CD8-positive, alpha-beta T cell (primary cell): ENCODE measurements at regions of chr5 and their contacts with region 1.

Region 1: DNA sequence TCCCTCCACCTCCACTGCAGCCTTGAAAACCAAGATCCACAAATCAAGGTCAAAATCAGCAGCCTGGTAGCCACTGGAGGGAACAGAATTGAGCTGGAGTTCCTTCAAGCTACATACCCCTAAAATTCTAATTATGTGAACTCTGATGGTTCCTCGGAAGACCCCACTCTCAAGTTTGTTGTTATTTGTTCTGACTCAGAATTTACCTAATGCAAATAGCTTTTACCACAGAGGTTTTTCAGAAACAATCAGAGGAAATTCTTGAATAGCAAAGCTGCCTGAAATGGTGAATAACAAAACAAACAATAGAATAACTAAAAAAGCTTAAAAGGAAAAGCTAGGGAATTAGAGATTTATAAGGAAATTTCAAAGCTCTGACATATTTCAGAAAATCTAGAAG is 220.0 kb downstream of the CDH18 start:
- DNase-seq: no peak
- ATAC-seq: no peak
- H3K4me3 ChIP-seq: no peak overlapping the region
- H3K4me3 Mint-ChIP-seq: no peak overlapping the region
- H3K27ac ChIP-seq: no peak overlapping the region
- H3K27ac Mint-ChIP-seq: no peak overlapping the region
- H3K4me1 ChIP-seq: no peaks in the 10 kb centered on the region
- H3K4me1 Mint-ChIP-seq: no peaks in the 10 kb centered on the region
- H3K27me3 ChIP-seq: no peaks in the 10 kb centered on the region
- H3K27me3 Mint-ChIP-seq: no peaks in the 10 kb centered on the region
- CTCF ChIP-seq: no peak

Region 2: GRCh38 chr5:19314851-19315327 is 453.1 kb before region 1 on chr5:
- CTCF ChIA-PET with region 1: no interaction called
- POLR2A ChIA-PET with region 1: no interaction called
- intact Hi-C with region 1: loop called in 1 of 2 experiments (anchors 5 kb)
- DNase-seq: no peak
- ATAC-seq: no peak
- H3K4me3 ChIP-seq: no peak overlapping the region
- H3K4me3 Mint-ChIP-seq: no peak overlapping the region
- H3K27ac ChIP-seq: no peak overlapping the region
- H3K27ac Mint-ChIP-seq: no peak overlapping the region
- H3K4me1 ChIP-seq: no peaks in the 10 kb centered on the region
- H3K4me1 Mint-ChIP-seq: no peaks in the 10 kb centered on the region
- H3K27me3 ChIP-seq: no peaks in the 10 kb centered on the region
- H3K27me3 Mint-ChIP-seq: no peaks in the 10 kb centered on the region
- CTCF ChIP-seq: no peak

Region 3: GRCh38 chr5:19806776-19807175 is 38.8 kb after region 1 on chr5:
- CTCF ChIA-PET with region 1: no interaction called
- POLR2A ChIA-PET with region 1: no interaction called
- intact Hi-C with region 1: loop called in 1 of 2 experiments (anchors 1 kb)
- DNase-seq: no peak
- ATAC-seq: no peak
- H3K4me3 ChIP-seq: no peak overlapping the region
- H3K4me3 Mint-ChIP-seq: no peak overlapping the region
- H3K27ac ChIP-seq: no peak overlapping the region
- H3K27ac Mint-ChIP-seq: no peak overlapping the region
- H3K4me1 ChIP-seq: no peaks in the 10 kb centered on the region
- H3K4me1 Mint-ChIP-seq: no peaks in the 10 kb centered on the region
- H3K27me3 ChIP-seq: no peaks in the 10 kb centered on the region
- H3K27me3 Mint-ChIP-seq: no peaks in the 10 kb centered on the region
- CTCF ChIP-seq: no peak